ENCODE measurements at regions of chr18 and their contacts with region 1.

Region 1: GRCh38 chr18:54679318-54680149 is 88.5 kb downstream of the DYNAP start:
- DNase-seq: peak; percentile 52
- CTCF ChIP-seq: peak; percentile 47

Region 2: DNA sequence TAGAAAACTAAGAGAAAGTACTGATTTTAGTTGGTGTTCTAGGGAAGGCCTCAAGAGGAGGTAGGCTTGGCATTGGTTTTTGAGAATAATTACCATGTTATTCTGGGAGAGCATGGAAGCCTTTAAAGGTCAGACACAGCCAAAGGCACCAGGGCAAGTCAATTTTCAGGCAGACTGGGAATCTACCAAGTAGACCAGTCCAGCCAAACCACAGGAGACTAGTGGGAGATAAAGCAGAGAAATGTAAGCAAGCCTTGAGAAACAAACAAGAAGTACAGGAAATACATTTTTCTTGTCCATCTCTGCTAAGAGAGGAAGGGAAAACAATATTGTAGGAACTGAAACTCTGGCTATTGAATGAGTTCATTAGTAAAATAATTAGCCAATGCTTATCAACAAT is 285.2 kb after region 1 on chr18:
- in situ Hi-C with region 1: no loop called
- DNase-seq: no peak
- CTCF ChIP-seq: no peak

Region 3: DNA sequence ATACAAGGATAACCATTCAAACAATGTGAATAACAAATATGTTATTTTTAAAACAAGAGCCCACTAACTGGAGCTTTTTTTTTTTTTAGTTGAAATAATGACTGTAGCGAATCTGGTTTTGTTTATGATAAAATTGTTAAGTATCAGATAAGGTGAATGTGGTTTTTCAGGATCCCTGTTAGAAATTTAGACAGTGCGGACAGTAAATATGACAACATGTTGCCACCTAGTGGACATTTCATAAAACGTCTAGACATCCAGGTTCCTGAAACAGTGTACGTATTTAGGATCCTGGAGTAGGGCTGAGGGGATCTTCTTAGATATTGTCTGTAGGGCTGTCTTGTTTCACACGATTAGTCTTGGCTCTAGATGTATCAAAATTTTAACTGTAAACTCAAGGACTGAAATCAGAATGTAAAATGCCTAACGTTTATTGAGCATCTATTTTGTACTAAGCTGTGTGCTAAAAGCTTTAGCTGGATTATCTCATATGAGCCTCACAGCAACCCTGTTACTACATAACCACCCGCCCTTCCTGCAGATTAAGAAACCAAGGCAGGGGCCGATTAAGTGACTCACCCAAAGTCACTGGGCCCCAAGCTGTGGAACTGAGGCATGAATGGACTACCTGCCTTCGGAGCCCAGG is 303.6 kb after region 1 on chr18:
- in situ Hi-C with region 1: loop called (anchors 25 kb)
- DNase-seq: peak; percentile 48
- CTCF ChIP-seq: peak; percentile 62

Measured in GM13977 (cell line).